ENCODE measurements at regions of chr5 and their contacts with region 1.

Region 1: DNA sequence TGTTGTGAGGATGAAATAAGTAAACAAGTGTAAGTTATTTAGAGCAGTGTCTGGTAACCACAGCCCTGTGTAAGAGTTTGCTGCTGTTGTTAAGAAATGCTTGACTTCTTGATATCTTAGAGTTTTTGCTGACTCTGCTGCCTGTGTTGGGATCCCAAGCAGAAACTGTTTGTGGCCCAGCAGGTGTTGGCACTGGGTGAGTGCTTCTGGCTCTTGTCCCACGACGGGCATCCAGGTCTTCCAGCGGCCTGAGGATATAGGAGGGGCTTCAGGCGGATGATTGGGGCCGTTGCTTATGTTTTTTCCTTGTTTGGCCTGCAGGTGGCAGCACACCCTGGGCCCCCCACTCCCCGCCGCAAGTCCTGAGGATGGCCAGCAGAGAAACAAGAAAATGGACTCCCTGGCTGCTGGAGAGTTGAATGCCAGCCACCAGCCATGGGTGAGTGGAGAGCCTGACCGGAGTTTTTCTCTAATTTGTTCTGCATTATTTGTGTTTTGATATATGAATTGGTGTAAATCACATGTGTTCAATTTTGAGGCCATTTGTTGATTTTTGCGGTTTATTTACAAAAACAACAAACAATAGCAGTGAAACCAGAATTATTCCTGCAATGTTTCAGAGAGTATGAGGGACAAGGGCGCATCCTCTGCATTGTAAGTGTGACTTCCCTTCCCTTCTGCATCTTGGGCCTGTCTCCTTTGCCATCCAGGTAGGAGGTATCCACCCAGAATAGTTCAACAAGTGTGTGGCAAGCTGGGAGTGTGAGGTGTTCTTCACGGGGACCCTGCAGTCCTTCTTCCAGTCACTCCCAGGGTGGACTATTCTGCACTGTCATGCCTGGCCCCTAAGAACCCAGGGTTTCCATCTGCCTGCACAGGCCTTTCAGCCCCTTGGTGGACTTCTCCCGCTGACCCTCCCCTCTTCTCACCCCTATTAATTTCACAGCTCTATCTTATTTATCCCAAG is 50.3 kb downstream of the SLC22A5 start:
- H3K4me3 Mint-ChIP-seq: no peak overlapping the region
- H3K27ac Mint-ChIP-seq: peak overlapping the region; percentile 62
- H3K4me1 Mint-ChIP-seq: peaks cover 94% of the 10 kb centered on the region
- H3K27me3 Mint-ChIP-seq: no peaks in the 10 kb centered on the region

Region 2: DNA sequence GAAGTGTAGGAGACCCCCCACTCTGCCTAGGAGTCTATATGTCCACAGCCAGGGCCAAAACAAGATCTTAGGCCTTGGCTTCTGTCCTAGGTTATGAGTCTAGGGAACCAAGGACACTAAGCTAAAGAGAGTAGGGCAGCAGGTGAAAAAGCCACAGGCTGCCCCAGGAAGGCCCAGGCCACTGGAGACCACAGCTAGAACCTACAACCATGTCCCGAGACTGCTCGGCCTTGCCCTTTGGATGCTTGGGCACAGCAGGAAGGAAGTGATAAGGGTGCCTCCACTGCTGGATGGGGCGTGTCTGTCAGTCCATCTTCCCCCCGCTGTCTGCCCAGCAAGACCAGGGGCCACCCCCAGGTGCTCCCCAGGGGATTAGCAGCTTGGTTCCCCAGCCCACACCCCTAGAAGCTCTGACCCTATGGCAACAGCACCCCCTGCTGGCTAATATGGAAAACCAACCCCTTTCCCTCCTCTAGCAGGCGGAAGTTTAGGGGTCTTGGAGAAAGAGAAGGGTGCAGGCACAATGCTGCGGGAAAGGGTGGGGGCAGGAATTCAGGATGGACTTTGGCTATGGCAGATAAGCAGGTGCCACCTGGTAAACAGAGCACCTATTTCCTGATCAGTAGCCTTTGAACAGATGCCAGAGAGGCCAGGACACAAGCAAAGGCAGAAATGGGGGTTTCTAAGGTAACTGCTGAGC is 81.3 kb after region 1 on chr5:
- intact Hi-C with region 1: loop called (anchors 1 kb)
- H3K4me3 Mint-ChIP-seq: no peak overlapping the region
- H3K27ac Mint-ChIP-seq: peak overlapping the region; percentile 46
- H3K4me1 Mint-ChIP-seq: peaks cover 44% of the 10 kb centered on the region
- H3K27me3 Mint-ChIP-seq: no peaks in the 10 kb centered on the region

Measured in dendritic cell treated with granulocyte-macrophage colony-stimulating factor and Interleukin-4, amounts not matched to agents 40 ng/mL and 50 ng/mL, for 4 days (primary cell).